Mucosa of descending colon (tissue), 3 donors: ENCODE measurements at regions of chr15 and their contacts with region 1.

Region 1: GRCh38 chr15:101294731-101295606 is at the start of gene SNRPA1:
- DNase-seq: peak; percentile 99
- ATAC-seq: peak; percentile 96
- H3K4me3 ChIP-seq: peak within 1 kb of the TSS; percentile 68
- H3K4me1 ChIP-seq: peaks cover 19% of the 10 kb centered on the region
- CTCF ChIP-seq: no peak
- total RNA-seq, gene SNRPA1: 41.5 to 55.1 (median 52.1) TPM

Region 2: DNA sequence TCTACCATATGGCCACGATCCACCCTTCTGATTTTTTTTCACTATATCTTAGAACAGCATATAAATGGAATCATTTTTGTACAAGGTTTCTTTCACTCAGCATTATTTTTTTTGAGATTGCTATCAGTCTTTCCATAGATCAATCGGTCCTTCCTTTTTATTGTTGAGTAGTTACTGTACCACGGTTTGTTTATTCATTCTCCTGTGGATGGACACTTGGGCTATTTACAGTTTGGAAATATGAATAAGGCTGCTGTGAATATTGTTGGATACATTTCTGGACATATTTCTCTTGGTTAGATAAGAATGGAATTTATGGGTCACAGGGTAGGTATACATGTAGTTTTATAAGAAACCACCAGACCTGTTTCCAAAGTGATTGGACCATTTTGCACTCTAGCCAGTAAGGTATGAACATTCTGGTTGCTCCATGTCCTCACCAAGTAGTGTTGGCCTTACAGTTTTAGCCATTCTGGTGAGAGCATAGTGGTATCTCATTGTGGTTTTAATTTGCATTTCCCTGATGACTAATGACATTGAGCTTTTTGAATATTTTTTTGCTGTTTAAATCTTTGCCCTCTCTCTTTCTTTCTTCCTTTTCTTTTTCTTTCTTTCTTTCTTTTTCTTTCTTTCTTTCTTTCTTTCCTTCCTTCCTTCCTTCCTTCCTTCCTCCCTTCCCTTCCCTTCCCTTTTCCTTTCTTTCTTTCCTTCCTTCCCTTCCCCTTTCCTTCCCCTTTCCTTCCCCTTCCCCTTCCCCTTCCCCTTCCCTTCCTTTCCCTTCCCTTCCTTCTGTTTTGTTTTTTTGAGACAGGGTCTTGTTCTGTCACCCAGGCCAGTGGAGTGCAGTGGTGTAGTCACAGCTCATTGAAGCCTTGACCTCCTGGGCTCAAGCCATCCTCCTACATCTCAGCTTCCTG is 326.7 kb before region 1 on chr15:
- intact Hi-C with region 1: no loop called
- DNase-seq: no peak
- ATAC-seq: no peak
- H3K4me3 ChIP-seq: no peak overlapping the region
- H3K4me1 ChIP-seq: no peaks in the 10 kb centered on the region
- CTCF ChIP-seq: no peak

Region 3: GRCh38 chr15:101251830-101252820 is 42.8 kb before region 1 on chr15 and contains the start of gene CHSY1:
- intact Hi-C with region 1: no loop called
- DNase-seq: peak; percentile 90 to 94 (median 93)
- ATAC-seq: peak; percentile 90
- H3K4me3 ChIP-seq: peak within 1 kb of the TSS; percentile 46
- H3K4me1 ChIP-seq: peaks cover 8% of the 10 kb centered on the region
- CTCF ChIP-seq: no peak
- total RNA-seq, gene CHSY1: 7.7 to 15.5 (median 12.6) TPM

Region 4: DNA sequence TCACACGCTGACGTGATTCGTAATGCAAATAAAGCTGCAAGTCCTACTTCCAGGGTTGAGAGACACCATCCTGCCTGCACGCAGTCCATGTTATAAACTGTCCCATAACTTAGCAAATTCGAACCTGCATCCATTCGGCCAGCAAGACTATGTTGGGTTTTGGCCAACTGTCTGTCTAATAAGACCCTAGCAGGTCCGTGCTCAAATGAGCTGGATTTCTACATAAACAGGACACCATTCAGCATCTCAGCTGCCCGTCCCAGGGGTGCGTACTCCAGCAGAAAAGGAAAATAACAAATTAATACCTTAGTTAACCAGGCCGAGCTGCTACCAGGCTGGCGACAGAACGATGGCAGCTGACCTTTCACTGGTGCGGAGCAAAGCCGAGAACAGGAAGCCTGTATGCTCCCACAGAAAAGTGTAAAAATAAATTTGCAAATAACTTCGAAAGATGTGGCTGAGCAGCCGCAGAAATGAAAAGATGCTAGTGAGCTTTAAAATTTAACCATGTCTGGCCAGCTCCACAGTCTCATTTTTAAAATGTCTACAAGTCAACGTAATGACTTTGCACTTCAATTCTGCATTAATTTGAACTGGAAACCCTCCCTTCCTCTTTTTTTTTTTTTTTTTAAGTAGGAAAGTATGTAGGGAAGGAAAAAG is 97.1 kb after region 1 on chr15:
- intact Hi-C with region 1: no loop called
- DNase-seq: no peak
- ATAC-seq: no peak
- H3K4me3 ChIP-seq: no peak overlapping the region
- H3K4me1 ChIP-seq: no peaks in the 10 kb centered on the region
- CTCF ChIP-seq: no peak

Region 5: GRCh38 chr15:101641166-101641764 is 346.3 kb after region 1 on chr15:
- intact Hi-C with region 1: loop called (anchors 5 kb)
- DNase-seq: peak in 2 of 3 donors; percentile 75 to 90
- ATAC-seq: peak; percentile 86
- H3K4me3 ChIP-seq: no peak overlapping the region
- H3K4me1 ChIP-seq: peaks cover 16% of the 10 kb centered on the region
- CTCF ChIP-seq: peak; percentile 86